Caco-2 (cell line): ENCODE measurements at regions of chr1 and their contacts with region 1.

Region 1: GRCh38 chr1:157170677-157171515 is 32.7 kb upstream of the ETV3 start:
- DNase-seq: peak; percentile 49 to 67
- H3K4me3 ChIP-seq: no peak overlapping the region
- H3K4me3 Mint-ChIP-seq: no peak overlapping the region
- H3K27ac Mint-ChIP-seq: no peak overlapping the region
- H3K4me1 ChIP-seq: no peaks in the 10 kb centered on the region
- H3K4me1 Mint-ChIP-seq: no peaks in the 10 kb centered on the region
- H3K27me3 ChIP-seq: no peaks in the 10 kb centered on the region
- H3K27me3 Mint-ChIP-seq: no peaks in the 10 kb centered on the region
- CTCF ChIP-seq: peak in 1 of 2 experiments; percentile 51

Region 2: GRCh38 chr1:156625436-156626078 is 545.3 kb before region 1 on chr1:
- CTCF ChIA-PET with region 1: no interaction called
- POLR2A ChIA-PET with region 1: no interaction called
- intact Hi-C with region 1: no loop called
- DNase-seq: peak; percentile 50 to 62
- H3K4me3 ChIP-seq: peak overlapping the region; percentile 28
- H3K4me3 Mint-ChIP-seq: peak overlapping the region; percentile 64
- H3K27ac Mint-ChIP-seq: no peak overlapping the region
- H3K4me1 ChIP-seq: peaks cover 13% of the 10 kb centered on the region
- H3K4me1 Mint-ChIP-seq: peaks cover 17% of the 10 kb centered on the region
- H3K27me3 ChIP-seq: peaks cover 1% of the 10 kb centered on the region; the same call in 1 of the 2 replicates
- H3K27me3 Mint-ChIP-seq: peaks cover 21% of the 10 kb centered on the region
- CTCF ChIP-seq: peak; percentile 74 to 75

Region 3: GRCh38 chr1:157073944-157074767 is 96.7 kb before region 1 on chr1:
- CTCF ChIA-PET with region 1: no interaction called
- POLR2A ChIA-PET with region 1: no interaction called
- intact Hi-C with region 1: no loop called
- DNase-seq: peak; percentile 75 to 77
- H3K4me3 ChIP-seq: peak overlapping the region; percentile 28
- H3K4me3 Mint-ChIP-seq: peak overlapping the region; percentile 63
- H3K27ac Mint-ChIP-seq: no peak overlapping the region
- H3K4me1 ChIP-seq: no peaks in the 10 kb centered on the region
- H3K4me1 Mint-ChIP-seq: peaks cover 8% of the 10 kb centered on the region
- H3K27me3 ChIP-seq: no peaks in the 10 kb centered on the region
- H3K27me3 Mint-ChIP-seq: no peaks in the 10 kb centered on the region
- CTCF ChIP-seq: peak; percentile 71 to 76

Region 4: GRCh38 chr1:157137046-157137407 is 33.9 kb before region 1 on chr1:
- CTCF ChIA-PET with region 1: no interaction called
- POLR2A ChIA-PET with region 1: no interaction called
- intact Hi-C with region 1: no loop called
- DNase-seq: no peak
- H3K4me3 ChIP-seq: peak overlapping the region; percentile 97
- H3K4me3 Mint-ChIP-seq: peak overlapping the region; percentile 91
- H3K27ac Mint-ChIP-seq: peak overlapping the region; percentile 87
- H3K4me1 ChIP-seq: peaks cover 52% of the 10 kb centered on the region
- H3K4me1 Mint-ChIP-seq: peaks cover 43% of the 10 kb centered on the region
- H3K27me3 ChIP-seq: no peaks in the 10 kb centered on the region
- H3K27me3 Mint-ChIP-seq: no peaks in the 10 kb centered on the region
- CTCF ChIP-seq: no peak

Region 5: GRCh38 chr1:157156058-157156541 is 14.8 kb before region 1 on chr1:
- CTCF ChIA-PET with region 1: no interaction called
- POLR2A ChIA-PET with region 1: no interaction called
- intact Hi-C with region 1: no loop called
- DNase-seq: peak; percentile 79 to 89
- H3K4me3 ChIP-seq: peak overlapping the region; percentile 24
- H3K4me3 Mint-ChIP-seq: peak overlapping the region; percentile 77
- H3K27ac Mint-ChIP-seq: peak overlapping the region; percentile 91
- H3K4me1 ChIP-seq: peaks cover 26% of the 10 kb centered on the region
- H3K4me1 Mint-ChIP-seq: peaks cover 27% of the 10 kb centered on the region
- H3K27me3 ChIP-seq: no peaks in the 10 kb centered on the region
- H3K27me3 Mint-ChIP-seq: no peaks in the 10 kb centered on the region
- CTCF ChIP-seq: peak; percentile 92 to 97

Region 6: DNA sequence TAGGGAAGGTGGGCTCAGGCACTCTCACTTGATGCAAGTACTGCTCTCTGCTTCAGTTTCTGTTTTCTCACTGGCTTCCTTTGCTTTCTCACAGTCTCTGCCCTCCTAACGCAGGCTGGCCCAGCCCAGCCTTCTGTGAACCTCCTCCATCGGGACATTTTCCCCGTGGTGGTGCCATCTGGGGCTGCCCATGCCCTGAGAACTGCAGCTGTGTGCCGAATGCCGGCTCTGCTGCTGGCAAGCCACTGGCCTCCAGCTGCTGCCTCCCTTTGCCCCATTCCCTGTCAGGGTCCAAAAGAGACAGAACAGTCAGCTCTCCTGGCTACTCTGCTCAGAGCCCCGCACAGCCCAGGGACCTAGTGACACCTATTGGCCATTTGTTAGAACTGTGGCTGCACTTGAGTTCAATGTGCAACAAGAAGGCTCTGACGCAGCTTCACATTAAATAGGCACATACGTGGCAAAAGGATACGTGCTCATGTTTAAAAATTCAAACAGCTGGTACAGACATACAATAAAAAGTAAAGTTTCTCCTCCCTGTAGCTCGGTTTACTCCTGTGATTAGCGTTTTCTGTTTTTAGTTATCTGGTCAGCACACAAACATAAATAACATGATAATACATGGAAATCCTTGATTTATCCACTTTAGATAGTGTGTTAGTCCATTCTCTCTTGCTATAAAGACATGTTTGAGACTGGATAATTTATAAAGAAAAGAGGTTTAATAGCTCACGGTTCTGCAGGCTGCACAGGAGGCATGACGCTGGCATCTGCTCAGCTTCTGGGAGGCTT is 334.8 kb after region 1 on chr1:
- CTCF ChIA-PET with region 1: no interaction called
- POLR2A ChIA-PET with region 1: no interaction called
- intact Hi-C with region 1: loop called (anchors 5 kb)
- DNase-seq: peak; percentile 63 to 73
- H3K4me3 ChIP-seq: no peak overlapping the region
- H3K4me3 Mint-ChIP-seq: no peak overlapping the region
- H3K27ac Mint-ChIP-seq: no peak overlapping the region
- H3K4me1 ChIP-seq: peaks cover 26% of the 10 kb centered on the region
- H3K4me1 Mint-ChIP-seq: peaks cover 14% of the 10 kb centered on the region
- H3K27me3 ChIP-seq: no peaks in the 10 kb centered on the region
- H3K27me3 Mint-ChIP-seq: no peaks in the 10 kb centered on the region
- CTCF ChIP-seq: peak; percentile 65 to 84

Region 7: DNA sequence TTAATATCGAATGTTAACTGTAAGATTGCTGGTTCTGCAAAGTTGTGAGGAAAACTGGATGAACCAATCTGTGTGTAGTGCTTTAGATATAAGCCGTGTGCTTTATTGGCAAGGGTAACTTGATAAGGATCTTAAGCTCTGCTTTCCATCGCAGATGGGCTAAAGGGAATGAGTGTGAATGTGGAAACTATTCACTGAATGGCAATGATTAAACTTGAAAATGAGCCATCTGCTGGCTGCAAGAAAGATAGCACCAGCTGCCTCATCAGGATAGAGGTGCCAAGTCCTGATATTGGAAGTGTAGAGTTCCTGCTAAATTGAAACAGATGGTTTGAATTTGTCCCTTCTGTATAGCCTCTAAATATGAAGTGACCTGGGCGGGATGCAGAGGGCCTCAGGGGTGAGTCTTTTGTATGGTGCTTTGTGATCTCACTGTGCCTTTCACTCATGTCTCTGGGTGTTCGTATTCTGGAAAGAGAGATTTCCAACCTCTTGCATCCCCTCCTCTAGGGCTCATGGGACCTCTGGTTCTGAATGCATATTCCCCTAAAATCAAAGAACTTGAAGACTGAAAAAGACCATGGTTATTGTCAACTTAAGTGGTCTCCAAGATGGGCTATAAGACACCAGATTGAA is 520.5 kb after region 1 on chr1:
- CTCF ChIA-PET with region 1: no interaction called
- POLR2A ChIA-PET with region 1: no interaction called
- intact Hi-C with region 1: loop called (anchors 2 kb)
- DNase-seq: peak in 1 of 2 experiments; percentile 30
- H3K4me3 ChIP-seq: no peak overlapping the region
- H3K4me3 Mint-ChIP-seq: no peak overlapping the region
- H3K27ac Mint-ChIP-seq: no peak overlapping the region
- H3K4me1 ChIP-seq: no peaks in the 10 kb centered on the region
- H3K4me1 Mint-ChIP-seq: no peaks in the 10 kb centered on the region
- H3K27me3 ChIP-seq: no peaks in the 10 kb centered on the region
- H3K27me3 Mint-ChIP-seq: peaks cover 10% of the 10 kb centered on the region
- CTCF ChIP-seq: peak; percentile 56 to 64